ENCODE measurements at regions of chr12 and their contacts with region 1.

Region 1: GRCh38 chr12:47237751-47238211 is 158.0 kb upstream of the AMIGO2 start:
- DNase-seq: no peak
- ATAC-seq: no peak
- H3K4me3 ChIP-seq: no peak overlapping the region
- H3K4me3 Mint-ChIP-seq: peak overlapping the region in 9 of 10 donors; percentile 20 to 75 (median 44)
- H3K27ac ChIP-seq: peak overlapping the region; percentile 18
- H3K27ac Mint-ChIP-seq: peak overlapping the region; percentile 28 to 89 (median 80)
- H3K4me1 ChIP-seq: peaks cover 10 to 33% of the 10 kb centered on the region in 2 donors
- H3K4me1 Mint-ChIP-seq: peaks cover 34 to 76% (median 60%) of the 10 kb centered on the region in 7 donors
- H3K27me3 ChIP-seq: no peaks in the 10 kb centered on the region
- H3K27me3 Mint-ChIP-seq: no peaks in the 10 kb centered on the region

Region 2: DNA sequence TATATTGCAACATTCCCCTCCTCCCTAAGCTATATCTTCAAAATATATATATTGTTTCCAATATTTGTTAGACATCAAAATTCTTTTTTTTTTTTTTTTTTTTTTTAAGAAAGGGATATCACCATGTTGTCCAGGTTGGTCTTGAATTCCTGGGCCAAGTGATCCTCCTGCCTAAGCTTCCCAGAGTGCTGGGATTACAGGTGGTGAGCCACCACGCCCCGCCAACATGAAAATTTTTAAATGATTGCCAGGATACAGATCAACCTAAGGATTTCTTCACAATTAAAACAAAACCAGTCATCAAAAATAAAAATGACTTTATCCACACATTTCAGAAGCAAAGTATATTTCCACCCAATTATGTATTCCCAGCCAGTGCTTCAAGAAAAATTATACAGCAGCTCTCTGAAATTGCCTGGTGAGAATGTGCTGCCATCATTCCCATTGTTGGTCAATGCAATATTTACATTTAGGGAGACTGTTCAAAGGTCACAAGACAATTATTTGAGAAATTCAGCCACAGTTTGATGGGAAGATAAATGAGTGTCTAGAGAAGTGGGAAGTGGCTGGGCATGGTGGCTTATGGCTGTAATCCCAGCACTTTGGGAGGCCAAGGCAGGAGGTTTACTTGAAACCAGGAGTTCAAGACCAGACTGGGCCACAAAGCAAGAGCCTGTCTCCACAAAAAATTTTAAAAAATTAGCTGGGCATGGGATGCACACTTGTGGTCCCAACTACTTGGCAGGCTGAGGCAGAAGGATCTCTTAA is 16.3 kb before region 1 on chr12:
- CTCF ChIA-PET with region 1: interaction called, 6 read pairs
- POLR2A ChIA-PET with region 1: interaction called, 7 read pairs
- intact Hi-C with region 1: loop called in 1 of 2 experiments (anchors 1 kb)
- DNase-seq: no peak
- ATAC-seq: no peak
- H3K4me3 ChIP-seq: peak overlapping the region; percentile 3
- H3K4me3 Mint-ChIP-seq: peak overlapping the region; percentile 72 to 93 (median 82)
- H3K27ac ChIP-seq: peak overlapping the region; percentile 76
- H3K27ac Mint-ChIP-seq: peak overlapping the region; percentile 75 to 96 (median 85)
- H3K4me1 ChIP-seq: peaks cover 49 to 50% of the 10 kb centered on the region in 2 donors
- H3K4me1 Mint-ChIP-seq: peaks cover 49 to 72% (median 65%) of the 10 kb centered on the region in 7 donors
- H3K27me3 ChIP-seq: no peaks in the 10 kb centered on the region
- H3K27me3 Mint-ChIP-seq: no peaks in the 10 kb centered on the region

Region 3: DNA sequence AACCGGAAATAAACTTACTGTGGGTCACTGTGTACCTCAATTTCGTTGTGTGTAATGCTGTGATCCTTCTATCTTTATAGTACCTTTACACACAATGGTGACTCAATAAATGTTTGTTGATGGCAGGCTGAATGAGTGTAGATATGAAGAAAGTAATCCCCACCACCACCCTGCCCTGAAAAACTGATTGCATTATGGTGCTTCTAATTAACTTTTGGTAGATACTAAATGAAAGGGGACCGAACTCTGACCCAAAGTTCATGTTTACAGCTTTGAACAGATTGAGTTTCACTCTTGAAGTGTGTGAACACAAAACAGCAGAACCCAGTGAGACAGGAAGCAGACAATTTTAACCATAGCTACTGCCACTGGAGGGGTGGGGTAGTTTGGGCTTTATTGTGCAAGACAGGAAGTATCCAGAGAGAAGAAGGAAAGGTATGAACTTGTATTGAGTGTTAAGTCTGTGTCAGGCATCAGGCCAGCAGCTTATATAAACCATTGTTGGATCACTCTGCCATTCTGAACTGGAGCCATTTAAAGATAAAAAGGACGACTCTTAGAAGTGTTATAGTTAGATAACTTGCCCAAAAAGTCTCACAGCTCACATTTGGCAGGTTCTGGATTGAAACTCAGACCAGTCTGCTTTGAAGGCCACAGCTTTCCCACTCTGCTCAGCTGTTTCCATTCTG is 39.0 kb after region 1 on chr12:
- CTCF ChIA-PET with region 1: interaction called, 3 read pairs
- POLR2A ChIA-PET with region 1: interaction called, 6 read pairs
- intact Hi-C with region 1: loop called in 1 of 2 experiments (anchors 1 kb)
- DNase-seq: peak; percentile 12 to 89 (median 84)
- ATAC-seq: peak; percentile 97
- H3K4me3 ChIP-seq: peak overlapping the region; percentile 31
- H3K4me3 Mint-ChIP-seq: peak overlapping the region; percentile 51 to 83 (median 74)
- H3K27ac ChIP-seq: peak overlapping the region; percentile 69
- H3K27ac Mint-ChIP-seq: peak overlapping the region; percentile 90 to 98 (median 92)
- H3K4me1 ChIP-seq: peaks cover 28 to 73% of the 10 kb centered on the region in 2 donors
- H3K4me1 Mint-ChIP-seq: peaks cover 42 to 97% (median 90%) of the 10 kb centered on the region in 7 donors
- H3K27me3 ChIP-seq: no peaks in the 10 kb centered on the region
- H3K27me3 Mint-ChIP-seq: no peaks in the 10 kb centered on the region

Region 4: GRCh38 chr12:47383942-47384341 is 146.2 kb after region 1 on chr12:
- CTCF ChIA-PET with region 1: no interaction called
- POLR2A ChIA-PET with region 1: no interaction called
- intact Hi-C with region 1: no loop called
- DNase-seq: no peak
- ATAC-seq: no peak
- H3K4me3 ChIP-seq: no peak overlapping the region
- H3K4me3 Mint-ChIP-seq: no peak overlapping the region
- H3K27ac ChIP-seq: no peak overlapping the region
- H3K27ac Mint-ChIP-seq: peak overlapping the region in 4 of 9 donors; percentile 37 to 66 (median 50)
- H3K4me1 ChIP-seq: peaks cover 0 to 6% of the 10 kb centered on the region in 2 donors
- H3K4me1 Mint-ChIP-seq: peaks cover 26 to 66% (median 54%) of the 10 kb centered on the region in 7 donors
- H3K27me3 ChIP-seq: no peaks in the 10 kb centered on the region
- H3K27me3 Mint-ChIP-seq: no peaks in the 10 kb centered on the region

Region 5: GRCh38 chr12:47408171-47408871 is 170.5 kb after region 1 on chr12:
- CTCF ChIA-PET with region 1: no interaction called
- POLR2A ChIA-PET with region 1: no interaction called
- intact Hi-C with region 1: no loop called
- DNase-seq: peak in 5 of 9 donors; percentile 22 to 55 (median 42)
- ATAC-seq: peak; percentile 71
- H3K4me3 ChIP-seq: no peak overlapping the region
- H3K4me3 Mint-ChIP-seq: peak overlapping the region in 7 of 10 donors; percentile 19 to 66 (median 49)
- H3K27ac ChIP-seq: peak overlapping the region; percentile 3
- H3K27ac Mint-ChIP-seq: peak overlapping the region; percentile 22 to 91 (median 83)
- H3K4me1 ChIP-seq: peaks cover 13 to 65% of the 10 kb centered on the region in 2 donors
- H3K4me1 Mint-ChIP-seq: peaks cover 36 to 89% (median 76%) of the 10 kb centered on the region in 7 donors
- H3K27me3 ChIP-seq: no peaks in the 10 kb centered on the region
- H3K27me3 Mint-ChIP-seq: no peaks in the 10 kb centered on the region

Measured in naive thymus-derived CD4-positive, alpha-beta T cell (primary cell).